IMR-90 (cell line): ENCODE measurements at regions of chr2 and their contacts with region 1.

Region 1: DNA sequence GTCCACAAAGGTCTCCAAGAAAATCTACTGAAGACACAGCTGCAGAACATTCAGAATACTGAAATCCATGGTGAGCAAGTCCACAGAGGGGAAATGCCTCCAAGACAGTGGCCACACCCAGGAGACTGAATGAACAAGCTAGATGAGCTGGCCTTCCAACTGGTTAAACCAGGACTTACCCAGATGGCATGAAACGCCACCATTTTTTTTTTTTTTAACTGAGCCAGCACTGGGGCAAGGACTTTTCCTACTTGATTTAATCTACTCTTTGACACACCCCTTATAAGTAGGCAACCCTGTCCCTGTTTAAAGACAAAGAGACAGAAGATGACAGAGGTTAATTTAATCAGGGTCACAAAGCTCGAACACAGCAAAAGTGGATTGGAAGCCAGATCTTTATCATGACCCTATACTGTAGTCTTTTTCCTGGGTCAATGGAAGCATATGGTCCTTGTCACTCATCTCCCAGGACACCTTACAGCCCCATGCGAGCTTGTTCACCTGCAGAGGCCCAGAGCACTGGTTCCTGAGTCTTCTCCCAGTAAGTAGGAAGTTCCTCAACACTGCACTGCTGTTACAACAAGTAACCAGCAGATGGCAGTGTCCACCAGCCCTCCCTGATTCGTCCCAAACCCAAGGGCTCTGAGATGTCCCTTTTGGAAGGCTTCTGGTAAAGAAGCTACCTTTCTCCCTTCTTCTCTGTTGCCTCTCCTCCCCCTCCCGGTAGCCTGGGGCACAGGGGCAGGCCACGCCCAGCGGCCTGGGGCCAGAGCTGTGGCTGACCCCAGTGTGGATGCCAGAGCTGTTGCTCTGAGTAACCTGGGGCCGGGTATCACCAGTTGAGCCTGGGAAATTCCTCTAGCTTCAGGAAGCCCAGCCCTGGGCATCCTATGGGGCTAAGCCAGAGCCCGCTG is 5.6 kb upstream of the GDF7 start:
- DNase-seq: peak; percentile 75
- ATAC-seq: peak; percentile 92
- H3K4me3 ChIP-seq: no peak overlapping the region
- H3K27ac ChIP-seq: no peak overlapping the region
- H3K4me1 ChIP-seq: peaks cover 5% of the 10 kb centered on the region; the same call in 1 of the 2 replicates
- H3K27me3 ChIP-seq: peaks cover 73% of the 10 kb centered on the region
- CTCF ChIP-seq: peak; percentile 96
- POLR2A ChIP-seq: peak; percentile 50; the same call in 1 of the 2 replicates
- RAD21 ChIP-seq: peak; percentile 99

Region 2: GRCh38 chr2:20675701-20676352 is 14.5 kb after region 1 on chr2:
- CTCF ChIA-PET with region 1: interaction called, 14 read pairs
- POLR2A ChIA-PET with region 1: no interaction called
- dilution Hi-C with region 1: no loop called
- in situ Hi-C with region 1: no loop called
- intact Hi-C with region 1: no loop called
- DNase-seq: no peak
- ATAC-seq: peak; percentile 49
- H3K4me3 ChIP-seq: no peak overlapping the region
- H3K27ac ChIP-seq: no peak overlapping the region
- H3K4me1 ChIP-seq: peaks cover 7% of the 10 kb centered on the region; the same call in 1 of the 2 replicates
- H3K27me3 ChIP-seq: peaks cover 21% of the 10 kb centered on the region
- CTCF ChIP-seq: no peak
- POLR2A ChIP-seq: no peak
- RAD21 ChIP-seq: no peak

Region 3: GRCh38 chr2:20916604-20917286 is 255.4 kb after region 1 on chr2:
- CTCF ChIA-PET with region 1: no interaction called
- POLR2A ChIA-PET with region 1: no interaction called
- dilution Hi-C with region 1: no loop called
- in situ Hi-C with region 1: no loop called
- intact Hi-C with region 1: loop called (anchors 2 kb)
- DNase-seq: peak; percentile 13
- ATAC-seq: peak; percentile 17; the same call in 1 of the 2 replicates
- H3K4me3 ChIP-seq: no peak overlapping the region
- H3K27ac ChIP-seq: no peak overlapping the region
- H3K4me1 ChIP-seq: no peaks in the 10 kb centered on the region
- H3K27me3 ChIP-seq: peaks cover 1% of the 10 kb centered on the region; the same call in 1 of the 2 replicates
- CTCF ChIP-seq: peak; percentile 28; the same call in 1 of the 2 replicates
- POLR2A ChIP-seq: no peak
- RAD21 ChIP-seq: 0 out of 2 replicates have a peak, but pooled peaks have one; percentile 12

Region 4: GRCh38 chr2:21026479-21027282 is 365.4 kb after region 1 on chr2:
- CTCF ChIA-PET with region 1: interaction called, 6 read pairs
- POLR2A ChIA-PET with region 1: no interaction called
- dilution Hi-C with region 1: no loop called
- in situ Hi-C with region 1: no loop called
- intact Hi-C with region 1: loop called (anchors 1 kb)
- DNase-seq: no peak
- ATAC-seq: no peak
- H3K4me3 ChIP-seq: no peak overlapping the region
- H3K27ac ChIP-seq: no peak overlapping the region
- H3K4me1 ChIP-seq: no peaks in the 10 kb centered on the region
- H3K27me3 ChIP-seq: no peaks in the 10 kb centered on the region
- CTCF ChIP-seq: no peak
- POLR2A ChIP-seq: no peak
- RAD21 ChIP-seq: no peak

Region 5: GRCh38 chr2:21118302-21118920 is 457.1 kb after region 1 on chr2:
- CTCF ChIA-PET with region 1: interaction called, 4 read pairs
- POLR2A ChIA-PET with region 1: no interaction called
- dilution Hi-C with region 1: no loop called
- in situ Hi-C with region 1: no loop called
- intact Hi-C with region 1: loop called (anchors 5 kb)
- DNase-seq: peak; percentile 14
- ATAC-seq: 0 out of 2 replicates have a peak, but pooled peaks have one; percentile 53
- H3K4me3 ChIP-seq: no peak overlapping the region
- H3K27ac ChIP-seq: no peak overlapping the region
- H3K4me1 ChIP-seq: no peaks in the 10 kb centered on the region
- H3K27me3 ChIP-seq: no peaks in the 10 kb centered on the region
- CTCF ChIP-seq: peak; percentile 34
- POLR2A ChIP-seq: no peak
- RAD21 ChIP-seq: peak; percentile 30; the same call in 1 of the 2 replicates